CD4-positive, alpha-beta memory T cell (primary cell): ENCODE measurements at regions of chr11 and their contacts with region 1.

Region 1: GRCh38 chr11:60265373-60266214 is 14.9 kb upstream of the MS4A4A start:
- DNase-seq: peak in 2 of 5 donors; percentile 1 to 7
- H3K4me3 ChIP-seq: no peak overlapping the region
- H3K4me3 Mint-ChIP-seq: no peak overlapping the region
- H3K27ac ChIP-seq: no peak overlapping the region
- H3K27ac Mint-ChIP-seq: no peak overlapping the region
- H3K4me1 ChIP-seq: no peaks in the 10 kb centered on the region
- H3K4me1 Mint-ChIP-seq: no peaks in the 10 kb centered on the region
- H3K27me3 ChIP-seq: no peaks in the 10 kb centered on the region
- H3K27me3 Mint-ChIP-seq: peaks cover 3 to 6% of the 10 kb centered on the region in 2 donors

Region 2: DNA sequence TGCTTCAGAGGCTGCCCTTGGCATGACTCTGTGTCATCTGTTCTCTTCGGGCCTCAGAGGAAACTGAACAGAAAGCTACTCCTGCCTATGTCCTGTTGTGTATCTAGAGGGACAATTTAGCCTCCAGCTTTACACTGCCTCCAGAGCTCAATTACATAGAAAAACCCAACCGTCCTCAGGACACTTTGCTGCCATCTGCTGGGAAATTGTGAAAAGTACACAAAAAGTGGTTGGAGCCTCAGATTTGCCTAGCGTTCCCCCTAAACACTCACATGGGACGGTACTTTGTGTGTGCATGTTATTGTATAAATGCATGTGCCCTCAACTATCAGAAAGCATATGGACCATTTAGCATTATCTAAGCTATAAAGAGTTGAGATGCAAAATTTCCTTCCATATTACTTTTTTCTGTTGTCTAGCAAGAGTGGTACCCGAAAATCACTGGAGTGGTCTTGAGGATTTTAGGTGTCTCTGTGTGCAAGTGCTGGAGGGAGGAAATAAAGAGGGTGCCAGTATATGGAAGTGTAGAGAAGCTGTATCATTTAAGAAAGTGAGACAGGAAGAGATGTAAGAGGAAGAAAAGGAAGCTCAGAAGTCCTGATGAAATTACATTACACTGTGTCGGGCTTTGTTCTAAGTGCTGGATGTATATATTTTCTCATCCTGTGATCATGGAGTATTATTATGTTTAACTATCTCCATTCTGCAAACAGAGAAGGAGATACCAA is 13.9 kb before region 1 on chr11:
- CTCF ChIA-PET with region 1: interaction called, 15 read pairs
- POLR2A ChIA-PET with region 1: no interaction called
- intact Hi-C with region 1: no loop called
- DNase-seq: peak in 2 of 5 donors; percentile 6 to 19
- H3K4me3 ChIP-seq: no peak overlapping the region
- H3K4me3 Mint-ChIP-seq: no peak overlapping the region
- H3K27ac ChIP-seq: no peak overlapping the region
- H3K27ac Mint-ChIP-seq: no peak overlapping the region
- H3K4me1 ChIP-seq: no peaks in the 10 kb centered on the region
- H3K4me1 Mint-ChIP-seq: no peaks in the 10 kb centered on the region
- H3K27me3 ChIP-seq: no peaks in the 10 kb centered on the region
- H3K27me3 Mint-ChIP-seq: peaks cover 14 to 20% of the 10 kb centered on the region in 2 donors

Region 3: DNA sequence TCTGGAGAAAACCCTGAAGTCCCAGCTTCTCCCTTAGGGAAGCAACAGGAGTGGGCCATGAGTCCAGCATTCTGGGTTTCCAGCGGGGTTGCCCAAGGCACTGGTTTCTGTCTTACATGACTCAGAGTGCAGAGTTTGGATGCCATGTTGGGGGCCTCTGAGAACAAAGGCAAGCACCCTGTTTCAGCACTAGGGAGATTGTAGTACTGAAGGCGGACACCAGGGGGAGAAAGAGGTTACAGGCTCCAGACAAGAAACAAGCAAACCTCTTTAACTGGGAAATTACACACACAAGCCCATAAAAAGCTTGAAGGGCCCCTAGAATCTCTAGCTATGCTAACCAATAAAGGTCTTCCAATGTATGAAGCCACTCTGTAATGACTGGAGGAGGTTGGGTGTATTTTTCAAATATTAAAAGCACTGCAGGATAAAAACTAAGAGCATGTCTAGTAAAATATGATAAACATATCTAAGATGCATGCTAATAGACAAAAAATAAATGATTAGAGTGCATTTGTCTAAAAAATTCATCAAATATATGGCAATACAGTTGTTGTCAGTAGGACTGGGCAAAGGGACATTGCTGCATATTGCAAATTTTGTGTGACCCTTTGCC is 68.5 kb after region 1 on chr11:
- CTCF ChIA-PET with region 1: no interaction called
- POLR2A ChIA-PET with region 1: no interaction called
- intact Hi-C with region 1: no loop called
- DNase-seq: peak; percentile 20 to 54 (median 40)
- H3K4me3 ChIP-seq: no peak overlapping the region
- H3K4me3 Mint-ChIP-seq: no peak overlapping the region
- H3K27ac ChIP-seq: no peak overlapping the region
- H3K27ac Mint-ChIP-seq: no peak overlapping the region
- H3K4me1 ChIP-seq: no peaks in the 10 kb centered on the region
- H3K4me1 Mint-ChIP-seq: no peaks in the 10 kb centered on the region
- H3K27me3 ChIP-seq: no peaks in the 10 kb centered on the region
- H3K27me3 Mint-ChIP-seq: peaks cover 18 to 25% of the 10 kb centered on the region in 2 donors

Region 4: GRCh38 chr11:60349990-60350389 is 84.4 kb after region 1 on chr11:
- CTCF ChIA-PET with region 1: no interaction called
- POLR2A ChIA-PET with region 1: no interaction called
- intact Hi-C with region 1: no loop called
- DNase-seq: no peak
- H3K4me3 ChIP-seq: no peak overlapping the region
- H3K4me3 Mint-ChIP-seq: no peak overlapping the region
- H3K27ac ChIP-seq: no peak overlapping the region
- H3K27ac Mint-ChIP-seq: no peak overlapping the region
- H3K4me1 ChIP-seq: no peaks in the 10 kb centered on the region
- H3K4me1 Mint-ChIP-seq: no peaks in the 10 kb centered on the region
- H3K27me3 ChIP-seq: no peaks in the 10 kb centered on the region
- H3K27me3 Mint-ChIP-seq: peaks cover 14 to 21% of the 10 kb centered on the region in 2 donors